Calu3 (cell line): ENCODE measurements at regions of chr3 and their contacts with region 1.

Region 1: GRCh38 chr3:192188218-192188835 is 539.0 kb downstream of the FGF12 start:
- DNase-seq: peak; percentile 84
- H3K4me3 Mint-ChIP-seq: no peak overlapping the region
- H3K27ac Mint-ChIP-seq: no peak overlapping the region
- H3K4me1 Mint-ChIP-seq: peaks cover 15% of the 10 kb centered on the region
- H3K27me3 Mint-ChIP-seq: no peaks in the 10 kb centered on the region
- CTCF ChIP-seq: peak; percentile 94

Region 2: GRCh38 chr3:192284443-192285087 is 96.2 kb after region 1 on chr3:
- CTCF ChIA-PET with region 1: no interaction called
- intact Hi-C with region 1: loop called (anchors 5 kb)
- DNase-seq: no peak
- H3K4me3 Mint-ChIP-seq: no peak overlapping the region
- H3K27ac Mint-ChIP-seq: no peak overlapping the region
- H3K4me1 Mint-ChIP-seq: peaks cover 10% of the 10 kb centered on the region
- H3K27me3 Mint-ChIP-seq: no peaks in the 10 kb centered on the region
- CTCF ChIP-seq: no peak